Activated CD4-positive, alpha-beta memory T cell treated with anti-CD3 and anti-CD28 coated beads for 36 hours (primary cell): ENCODE measurements at regions of chr1 and their contacts with region 1.

Region 1: DNA sequence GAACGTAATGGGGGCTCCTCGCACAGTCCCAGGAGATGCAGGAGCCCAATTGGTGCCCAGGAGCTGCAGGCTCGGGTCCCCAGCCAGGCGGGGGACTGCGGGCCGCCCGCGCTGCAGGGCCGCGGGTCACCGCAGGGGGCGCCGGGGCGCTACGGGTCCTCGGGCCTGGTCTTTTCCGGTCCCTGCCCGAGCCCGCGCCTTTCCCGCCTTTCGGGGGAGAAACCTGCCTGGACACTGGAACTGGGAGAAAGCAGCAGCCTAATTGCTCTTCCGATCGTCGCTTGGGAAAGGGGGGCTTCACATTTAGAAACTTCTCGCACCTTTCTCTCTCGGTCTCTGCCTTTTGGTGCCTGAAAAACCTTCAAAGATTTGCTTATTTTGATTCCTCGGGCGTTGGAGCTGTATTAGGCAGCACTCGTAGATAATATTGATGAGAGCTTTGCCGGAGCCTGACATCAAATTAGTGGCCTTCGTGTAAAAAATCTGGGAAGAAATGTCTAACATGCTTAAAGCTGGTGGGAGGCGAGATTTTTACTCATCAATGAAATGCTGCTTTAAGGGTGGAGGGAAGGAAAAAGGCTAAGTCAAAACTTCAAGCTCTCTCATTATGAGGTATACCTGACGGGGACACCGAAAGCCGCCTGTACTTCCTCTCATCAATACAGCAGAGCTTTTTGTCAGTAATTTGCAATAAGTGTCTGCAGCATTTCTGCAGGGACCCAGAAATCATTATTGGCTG is 12.6 kb upstream of the BARHL2 start:
- DNase-seq: peak; percentile 41
- H3K4me3 Mint-ChIP-seq: peak overlapping the region; percentile 33
- H3K27ac Mint-ChIP-seq: no peak overlapping the region
- H3K4me1 Mint-ChIP-seq: peaks cover 40% of the 10 kb centered on the region
- H3K27me3 Mint-ChIP-seq: peaks cover 78% of the 10 kb centered on the region

Region 2: DNA sequence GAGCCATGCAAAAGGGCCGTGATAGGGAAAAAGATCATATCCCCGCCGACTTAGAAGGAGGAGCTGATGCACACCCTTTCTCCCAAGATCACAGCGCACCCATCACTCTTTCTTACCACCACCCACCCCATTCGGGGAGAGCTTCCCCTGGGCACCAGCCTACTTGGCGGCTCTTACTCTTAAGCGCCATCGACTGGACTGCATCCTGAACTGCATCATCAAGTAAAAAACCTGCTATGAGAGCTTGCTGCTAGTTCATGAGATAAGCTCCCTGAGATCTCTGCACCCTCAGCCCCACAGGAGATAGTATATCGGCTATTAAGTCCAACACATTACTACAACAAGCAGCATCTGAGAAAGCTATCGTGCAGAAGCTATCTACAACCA is 137.7 kb before region 1 on chr1:
- CTCF ChIA-PET with region 1: no interaction called
- POLR2A ChIA-PET with region 1: no interaction called
- intact Hi-C with region 1: no loop called
- DNase-seq: no peak
- H3K4me3 Mint-ChIP-seq: no peak overlapping the region
- H3K27ac Mint-ChIP-seq: no peak overlapping the region
- H3K4me1 Mint-ChIP-seq: no peaks in the 10 kb centered on the region
- H3K27me3 Mint-ChIP-seq: peaks cover 17% of the 10 kb centered on the region

Region 3: GRCh38 chr1:90713741-90714509 is 15.7 kb before region 1 on chr1:
- CTCF ChIA-PET with region 1: interaction called, 4 read pairs
- POLR2A ChIA-PET with region 1: interaction called, 3 read pairs
- intact Hi-C with region 1: loop called (anchors 2 kb)
- DNase-seq: no peak
- H3K4me3 Mint-ChIP-seq: no peak overlapping the region
- H3K27ac Mint-ChIP-seq: no peak overlapping the region
- H3K4me1 Mint-ChIP-seq: peaks cover 19% of the 10 kb centered on the region
- H3K27me3 Mint-ChIP-seq: peaks cover 80% of the 10 kb centered on the region

Region 4: GRCh38 chr1:90778486-90778885 is 48.8 kb after region 1 on chr1:
- CTCF ChIA-PET with region 1: no interaction called
- POLR2A ChIA-PET with region 1: no interaction called
- intact Hi-C with region 1: no loop called
- DNase-seq: no peak
- H3K4me3 Mint-ChIP-seq: no peak overlapping the region
- H3K27ac Mint-ChIP-seq: no peak overlapping the region
- H3K4me1 Mint-ChIP-seq: no peaks in the 10 kb centered on the region
- H3K27me3 Mint-ChIP-seq: peaks cover 11% of the 10 kb centered on the region